B cell (primary cell): ENCODE measurements at regions of chr16 and their contacts with region 1.

Region 1: GRCh38 chr16:78770353-78771091 is 671.1 kb downstream of the WWOX start:
- DNase-seq: peak; percentile 84
- ATAC-seq: peak; percentile 85
- H3K4me3 ChIP-seq: no peak overlapping the region
- H3K4me3 Mint-ChIP-seq: peak overlapping the region; percentile 1
- H3K27ac ChIP-seq: peak overlapping the region in 1 of 2 donors; percentile 35
- H3K27ac Mint-ChIP-seq: peak overlapping the region; percentile 8
- H3K4me1 ChIP-seq: peaks cover 10 to 19% of the 10 kb centered on the region in 2 donors
- H3K4me1 Mint-ChIP-seq: peaks cover 16% of the 10 kb centered on the region
- H3K27me3 ChIP-seq: no peaks in the 10 kb centered on the region
- H3K27me3 Mint-ChIP-seq: no peaks in the 10 kb centered on the region
- CTCF ChIP-seq: peak; percentile 95

Region 2: GRCh38 chr16:77514500-77515220 is 1255.9 kb before region 1 on chr16:
- CTCF ChIA-PET with region 1: no interaction called
- POLR2A ChIA-PET with region 1: no interaction called
- intact Hi-C with region 1: no loop called
- DNase-seq: no peak
- ATAC-seq: no peak
- H3K4me3 ChIP-seq: no peak overlapping the region
- H3K4me3 Mint-ChIP-seq: no peak overlapping the region
- H3K27ac ChIP-seq: no peak overlapping the region
- H3K27ac Mint-ChIP-seq: no peak overlapping the region
- H3K4me1 ChIP-seq: no peaks in the 10 kb centered on the region
- H3K4me1 Mint-ChIP-seq: no peaks in the 10 kb centered on the region
- H3K27me3 ChIP-seq: no peaks in the 10 kb centered on the region
- H3K27me3 Mint-ChIP-seq: peaks cover 6% of the 10 kb centered on the region
- CTCF ChIP-seq: no peak

Region 3: GRCh38 chr16:78348886-78349285 is 421.6 kb before region 1 on chr16:
- CTCF ChIA-PET with region 1: no interaction called
- POLR2A ChIA-PET with region 1: no interaction called
- intact Hi-C with region 1: no loop called
- DNase-seq: no peak
- ATAC-seq: no peak
- H3K4me3 ChIP-seq: no peak overlapping the region
- H3K4me3 Mint-ChIP-seq: no peak overlapping the region
- H3K27ac ChIP-seq: no peak overlapping the region
- H3K27ac Mint-ChIP-seq: no peak overlapping the region
- H3K4me1 ChIP-seq: no peaks in the 10 kb centered on the region
- H3K4me1 Mint-ChIP-seq: no peaks in the 10 kb centered on the region
- H3K27me3 ChIP-seq: no peaks in the 10 kb centered on the region
- H3K27me3 Mint-ChIP-seq: no peaks in the 10 kb centered on the region
- CTCF ChIP-seq: no peak

Region 4: GRCh38 chr16:78503602-78504001 is 266.9 kb before region 1 on chr16:
- CTCF ChIA-PET with region 1: interaction called, 14 read pairs
- POLR2A ChIA-PET with region 1: no interaction called
- intact Hi-C with region 1: no loop called
- DNase-seq: peak; percentile 62
- ATAC-seq: no peak
- H3K4me3 ChIP-seq: no peak overlapping the region
- H3K4me3 Mint-ChIP-seq: no peak overlapping the region
- H3K27ac ChIP-seq: no peak overlapping the region
- H3K27ac Mint-ChIP-seq: no peak overlapping the region
- H3K4me1 ChIP-seq: no peaks in the 10 kb centered on the region
- H3K4me1 Mint-ChIP-seq: no peaks in the 10 kb centered on the region
- H3K27me3 ChIP-seq: no peaks in the 10 kb centered on the region
- H3K27me3 Mint-ChIP-seq: no peaks in the 10 kb centered on the region
- CTCF ChIP-seq: peak; percentile 80

Region 5: DNA sequence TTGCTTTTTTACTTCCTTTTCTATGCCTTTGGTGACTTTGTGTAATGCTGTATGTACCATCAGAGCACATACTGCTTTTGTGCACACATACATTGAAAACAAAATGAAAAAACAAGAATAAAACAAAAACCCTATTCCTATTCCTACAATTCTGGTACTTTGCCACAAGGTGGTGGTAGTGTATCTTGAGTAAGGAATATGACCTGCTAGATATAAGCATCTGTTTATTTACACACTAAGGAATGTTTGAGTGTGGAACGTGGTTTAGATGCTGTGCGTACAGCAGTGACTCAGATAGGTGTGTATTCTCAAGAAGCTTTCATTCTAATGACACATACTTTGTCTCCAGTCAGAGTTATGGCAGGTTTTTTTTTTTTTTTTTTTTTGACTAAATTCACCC is 64.8 kb before region 1 on chr16:
- CTCF ChIA-PET with region 1: interaction called, 27 read pairs
- POLR2A ChIA-PET with region 1: no interaction called
- intact Hi-C with region 1: loop called (anchors 1 kb)
- DNase-seq: peak; percentile 39
- ATAC-seq: no peak
- H3K4me3 ChIP-seq: no peak overlapping the region
- H3K4me3 Mint-ChIP-seq: no peak overlapping the region
- H3K27ac ChIP-seq: no peak overlapping the region
- H3K27ac Mint-ChIP-seq: no peak overlapping the region
- H3K4me1 ChIP-seq: no peaks in the 10 kb centered on the region
- H3K4me1 Mint-ChIP-seq: peaks cover 2% of the 10 kb centered on the region
- H3K27me3 ChIP-seq: no peaks in the 10 kb centered on the region
- H3K27me3 Mint-ChIP-seq: no peaks in the 10 kb centered on the region
- CTCF ChIP-seq: peak; percentile 59